ENCODE measurements at regions of chr19 and their contacts with region 1.

Region 1: GRCh38 chr19:57599761-57600383 is at the start of gene ZNF530:
- DNase-seq: peak; percentile 72 to 87
- H3K4me3 ChIP-seq: peak within 1 kb of the TSS; percentile 74 to 90 (median 82)
- H3K27ac ChIP-seq: no peak within 1 kb of the TSS
- H3K4me1 ChIP-seq: peaks cover 0 to 3% (median 2%) of the 10 kb centered on the region in 4 experiments; a peak in 3 of 7 replicates
- H3K27me3 ChIP-seq: no peaks in the 10 kb centered on the region
- CTCF ChIP-seq: no peak
- EP300 ChIP-seq: no peak
- POLR2A ChIP-seq: no peak
- RAD21 ChIP-seq: no peak; a peak in 1 of 4 replicates
- total RNA-seq, gene ZNF530: 6.3 and 9.3 TPM in 2 replicates

Region 2: DNA sequence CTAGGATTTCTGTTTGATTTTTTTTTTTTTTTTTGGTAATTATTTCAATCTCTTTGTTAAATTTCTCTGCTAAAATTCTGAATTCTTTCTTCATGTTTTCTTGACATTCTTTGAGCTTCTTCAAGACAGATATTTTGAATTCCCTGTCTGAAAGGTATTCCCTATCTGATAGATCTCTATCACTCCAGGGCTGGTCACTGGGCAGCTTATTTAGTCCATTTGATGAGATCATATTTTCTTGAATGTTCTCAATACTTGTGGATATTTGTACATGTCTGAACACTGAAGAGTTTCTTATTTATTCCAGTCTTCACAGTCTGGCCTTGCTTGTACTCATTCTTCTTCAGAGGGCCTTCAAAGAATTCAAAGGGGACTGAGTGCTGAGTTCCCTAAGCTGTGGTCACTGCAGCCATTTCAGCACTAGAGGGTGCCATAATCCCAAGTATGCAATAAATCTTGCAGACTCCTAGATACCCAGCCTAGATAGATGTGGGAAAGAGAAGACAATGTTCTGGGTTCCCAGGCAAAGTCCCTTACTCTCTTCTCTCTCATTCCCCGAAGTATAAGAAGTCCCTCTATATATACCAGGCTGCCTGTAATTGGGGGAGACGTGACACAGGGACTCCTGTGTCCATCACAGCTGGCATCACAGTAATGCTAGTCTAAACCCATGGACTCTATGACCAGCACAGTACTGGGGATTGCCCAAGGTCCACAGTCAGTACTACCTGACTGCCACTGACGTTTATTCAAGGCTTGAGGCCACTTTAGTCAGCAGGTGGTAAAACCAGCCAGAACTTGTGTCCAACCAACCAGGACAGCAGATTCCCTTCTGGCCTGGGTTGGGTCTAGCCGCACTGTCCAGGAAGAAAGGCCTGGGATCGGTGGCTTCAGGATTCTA is 134.1 kb before region 1 on chr19:
- CTCF ChIA-PET with region 1: no interaction called
- POLR2A ChIA-PET with region 1: no interaction called
- DNase-seq: peak in 1 of 2 experiments; percentile 56
- H3K4me3 ChIP-seq: no peak overlapping the region
- H3K27ac ChIP-seq: no peak overlapping the region
- H3K4me1 ChIP-seq: no peaks in the 10 kb centered on the region
- H3K27me3 ChIP-seq: no peaks in the 10 kb centered on the region
- CTCF ChIP-seq: peak in 2 of 3 experiments; percentile 57 to 74; a peak in 3 of 4 replicates
- EP300 ChIP-seq: no peak
- POLR2A ChIP-seq: no peak
- RAD21 ChIP-seq: peak; percentile 83 to 84

Region 3: GRCh38 chr19:57583521-57584416 is 16.1 kb before region 1 on chr19 and contains the start of gene ZIK1:
- CTCF ChIA-PET with region 1: interaction called, 3 read pairs
- POLR2A ChIA-PET with region 1: interaction called, 11 read pairs
- DNase-seq: peak; percentile 90 to 92
- H3K4me3 ChIP-seq: peak within 1 kb of the TSS; percentile 87 to 95 (median 93)
- H3K27ac ChIP-seq: peak within 1 kb of the TSS; percentile 80; the same call in 1 of the 2 replicates
- H3K4me1 ChIP-seq: peaks cover 4 to 13% (median 8%) of the 10 kb centered on the region in 4 experiments; a peak in 6 of 7 replicates
- H3K27me3 ChIP-seq: peaks cover 0 to 5% (median 2%) of the 10 kb centered on the region in 4 experiments; a peak in 2 of 7 replicates
- CTCF ChIP-seq: peak; percentile 13 to 15 (median 15); a peak in 3 of 4 replicates
- EP300 ChIP-seq: no peak
- POLR2A ChIP-seq: peak; percentile 63 to 82; a peak in 2 of 3 replicates
- RAD21 ChIP-seq: peak in 1 of 2 experiments; percentile 12; a peak in 2 of 4 replicates
- total RNA-seq, gene ZIK1: 36.5 and 38.5 TPM in 2 replicates

Region 4: DNA sequence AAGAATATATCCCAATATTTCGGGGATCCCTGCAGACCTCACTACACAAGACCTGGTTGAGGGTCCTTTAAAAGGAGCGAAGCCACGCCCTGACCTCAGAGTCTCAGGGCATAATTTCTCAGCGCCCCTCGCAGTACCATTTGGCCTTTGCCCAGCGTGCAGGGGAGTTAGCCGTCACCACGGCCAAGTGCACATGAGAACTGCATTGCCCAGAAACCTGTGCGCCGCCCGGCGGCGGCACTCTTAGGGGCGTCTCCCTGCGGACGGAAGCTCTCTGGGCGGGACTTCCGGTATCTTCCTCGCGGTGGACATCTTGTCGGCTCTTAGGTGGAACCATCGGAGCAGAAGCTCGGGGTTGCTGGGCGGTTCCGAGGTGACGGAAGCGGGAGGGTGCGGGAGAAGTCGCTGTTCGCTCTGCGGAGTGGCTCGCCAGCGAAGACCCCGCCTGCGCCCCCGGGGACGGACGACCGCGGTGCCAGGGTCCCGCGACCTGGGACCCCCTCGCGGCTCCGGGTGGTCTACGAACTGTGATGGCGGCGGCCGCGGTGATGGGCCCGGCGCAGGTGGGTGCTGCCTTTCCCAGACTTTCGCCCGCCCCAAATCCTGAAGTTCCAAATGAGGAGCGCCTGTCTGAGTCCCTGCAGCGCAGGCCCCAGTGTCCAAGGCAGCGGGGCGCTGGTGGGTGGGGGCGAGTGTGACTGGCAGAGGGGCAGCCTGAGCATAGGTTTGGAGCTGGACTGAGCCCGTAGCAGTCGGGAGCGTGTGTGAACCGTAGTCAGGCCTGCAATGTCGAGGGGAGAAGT is 14.3 kb after region 1 on chr19 and contains the start of gene ZNF134:
- CTCF ChIA-PET with region 1: interaction called, 4 read pairs
- POLR2A ChIA-PET with region 1: interaction called, 12 read pairs
- DNase-seq: peak; percentile 66 to 90
- H3K4me3 ChIP-seq: peak within 1 kb of the TSS; percentile 94 to 98 (median 96)
- H3K27ac ChIP-seq: peak within 1 kb of the TSS; percentile 89
- H3K4me1 ChIP-seq: peaks cover 0 to 3% (median 0%) of the 10 kb centered on the region in 4 experiments; a peak in 3 of 7 replicates
- H3K27me3 ChIP-seq: peaks cover 0 to 1% (median 0%) of the 10 kb centered on the region in 4 experiments; a peak in 1 of 7 replicates
- CTCF ChIP-seq: no peak
- EP300 ChIP-seq: no peak
- POLR2A ChIP-seq: peak; percentile 67 to 88
- RAD21 ChIP-seq: 0 out of 4 replicates have a peak, but pooled peaks of 1 of the 2 experiments have one; percentile 2
- total RNA-seq, gene ZNF134: 54.6 and 55.1 TPM in 2 replicates

Region 5: DNA sequence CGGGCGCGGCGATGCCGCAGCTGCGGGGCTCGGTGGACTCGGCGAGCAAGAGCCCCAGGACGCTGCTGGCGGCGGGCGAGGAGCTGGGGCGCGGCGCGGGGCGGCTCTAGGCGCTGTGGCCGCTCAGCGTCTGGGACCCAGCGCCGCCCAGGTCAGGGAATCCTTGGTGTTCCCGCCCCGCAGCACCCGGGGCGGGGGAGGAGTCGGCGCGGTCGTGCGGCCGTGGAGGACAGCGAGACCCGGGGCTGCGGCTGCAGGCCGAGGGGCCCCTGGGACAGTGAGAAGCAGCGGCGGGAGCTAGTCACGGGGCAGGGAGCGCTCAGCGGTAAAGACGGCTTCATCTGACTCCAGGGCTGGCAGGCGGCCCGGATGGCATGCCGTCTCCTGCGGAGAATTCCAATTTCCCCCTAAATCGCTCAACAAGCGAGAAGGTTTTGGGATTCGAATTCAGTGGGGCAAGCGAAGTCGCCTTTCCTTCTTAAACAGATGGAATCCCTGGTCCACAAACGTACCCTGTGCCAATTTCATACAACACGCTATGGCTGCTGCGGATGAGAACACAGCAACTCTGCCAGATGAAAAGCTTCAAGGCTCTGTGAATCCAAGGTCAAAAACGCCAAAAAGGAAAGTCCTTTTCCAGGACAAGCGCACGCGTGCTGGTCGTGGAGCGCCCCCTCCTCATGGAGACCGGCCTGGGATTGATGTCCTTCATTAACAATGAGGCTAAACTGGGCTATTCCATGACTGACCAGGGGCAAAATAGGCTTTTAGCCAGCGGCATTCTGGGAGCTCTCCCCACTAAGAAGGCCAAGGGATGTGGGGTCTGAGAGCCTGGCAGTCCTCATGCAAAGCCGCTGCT is 64.6 kb after region 1 on chr19:
- CTCF ChIA-PET with region 1: no interaction called
- POLR2A ChIA-PET with region 1: no interaction called
- DNase-seq: peak in 1 of 2 experiments; percentile 83
- H3K4me3 ChIP-seq: peak overlapping the region; percentile 40 to 72 (median 56)
- H3K27ac ChIP-seq: no peak overlapping the region
- H3K4me1 ChIP-seq: peaks cover 2 to 5% (median 4%) of the 10 kb centered on the region in 4 experiments
- H3K27me3 ChIP-seq: no peaks in the 10 kb centered on the region; a peak in 4 of 7 replicates
- CTCF ChIP-seq: no peak
- EP300 ChIP-seq: no peak
- POLR2A ChIP-seq: peak; percentile 63 to 81
- RAD21 ChIP-seq: no peak